ENCODE measurements at regions of chr9 and their contacts with region 1.

Region 1: GRCh38 chr9:114829574-114830440 is 24.0 kb upstream of the TNFSF15 start:
- DNase-seq: no peak
- ATAC-seq: no peak
- H3K4me3 Mint-ChIP-seq: no peak overlapping the region
- H3K27ac Mint-ChIP-seq: no peak overlapping the region
- H3K4me1 Mint-ChIP-seq: no peaks in the 10 kb centered on the region
- H3K27me3 Mint-ChIP-seq: peaks cover 6% of the 10 kb centered on the region
- CTCF ChIP-seq: no peak

Region 2: GRCh38 chr9:114448706-114449105 is 381.1 kb before region 1 on chr9:
- CTCF ChIA-PET with region 1: no interaction called
- POLR2A ChIA-PET with region 1: no interaction called
- intact Hi-C with region 1: no loop called
- DNase-seq: no peak
- ATAC-seq: no peak
- H3K4me3 Mint-ChIP-seq: no peak overlapping the region
- H3K27ac Mint-ChIP-seq: peak overlapping the region; percentile 57
- H3K4me1 Mint-ChIP-seq: peaks cover 69% of the 10 kb centered on the region
- H3K27me3 Mint-ChIP-seq: no peaks in the 10 kb centered on the region
- CTCF ChIP-seq: no peak

Region 3: GRCh38 chr9:114861922-114862605 is 32.3 kb after region 1 on chr9:
- CTCF ChIA-PET with region 1: no interaction called
- POLR2A ChIA-PET with region 1: no interaction called
- intact Hi-C with region 1: loop called (anchors 5 kb)
- DNase-seq: no peak
- ATAC-seq: no peak
- H3K4me3 Mint-ChIP-seq: no peak overlapping the region
- H3K27ac Mint-ChIP-seq: no peak overlapping the region
- H3K4me1 Mint-ChIP-seq: peaks cover 10% of the 10 kb centered on the region
- H3K27me3 Mint-ChIP-seq: no peaks in the 10 kb centered on the region
- CTCF ChIP-seq: no peak

Region 4: DNA sequence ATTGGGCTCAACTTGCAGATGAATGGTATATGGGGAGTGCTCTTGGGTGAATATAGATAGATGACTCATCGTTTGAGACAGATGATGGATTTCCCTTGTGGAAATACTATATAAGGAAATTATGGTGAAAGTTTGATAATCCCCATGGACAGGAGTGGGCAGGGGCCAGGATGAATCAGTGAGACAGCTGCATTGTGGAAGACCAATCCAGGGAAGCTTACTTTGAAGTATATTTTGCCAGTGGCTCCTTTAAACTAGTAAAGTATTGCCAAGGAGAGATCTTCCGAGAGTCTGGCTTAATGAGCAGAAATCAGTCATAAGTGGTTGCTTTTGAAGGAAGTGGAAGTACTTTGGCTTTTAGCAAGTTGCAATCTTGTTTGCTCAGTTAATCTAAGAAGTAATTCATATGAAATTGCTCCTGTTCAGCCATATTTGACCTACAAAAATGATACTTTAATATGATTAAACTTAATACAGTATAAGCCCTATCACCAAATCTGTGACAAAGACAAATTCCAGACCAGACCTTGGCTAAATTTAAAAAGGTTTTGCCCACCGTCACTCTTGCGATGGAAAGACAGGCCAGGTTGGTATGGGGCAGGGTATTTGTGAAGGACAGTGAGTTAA is 297.5 kb after region 1 on chr9:
- CTCF ChIA-PET with region 1: no interaction called
- POLR2A ChIA-PET with region 1: no interaction called
- intact Hi-C with region 1: no loop called
- DNase-seq: no peak
- ATAC-seq: no peak
- H3K4me3 Mint-ChIP-seq: no peak overlapping the region
- H3K27ac Mint-ChIP-seq: no peak overlapping the region
- H3K4me1 Mint-ChIP-seq: no peaks in the 10 kb centered on the region
- H3K27me3 Mint-ChIP-seq: peaks cover 16% of the 10 kb centered on the region
- CTCF ChIP-seq: no peak